SK-N-SH (cell line): ENCODE measurements at regions of chr1 and their contacts with region 1.

Region 1: GRCh38 chr1:179706339-179706941 is 36.7 kb upstream of the FAM163A start:
- DNase-seq: peak; percentile 56
- H3K4me3 ChIP-seq: no peak overlapping the region; a peak in 1 of 4 replicates
- H3K27ac ChIP-seq: peak overlapping the region in 1 of 2 experiments; percentile 39; a peak in 1 of 4 replicates
- H3K4me1 ChIP-seq: peaks cover 0 to 23% of the 10 kb centered on the region in 2 experiments; a peak in 2 of 4 replicates
- H3K27me3 ChIP-seq: no peaks in the 10 kb centered on the region
- CTCF ChIP-seq: peak; percentile 96
- EP300 ChIP-seq: no peak
- RAD21 ChIP-seq: peak; percentile 99

Region 2: GRCh38 chr1:179447489-179447888 is 259.0 kb before region 1 on chr1:
- CTCF ChIA-PET with region 1: no interaction called
- POLR2A ChIA-PET with region 1: no interaction called
- DNase-seq: no peak
- H3K4me3 ChIP-seq: no peak overlapping the region
- H3K27ac ChIP-seq: no peak overlapping the region
- H3K4me1 ChIP-seq: no peaks in the 10 kb centered on the region
- H3K27me3 ChIP-seq: no peaks in the 10 kb centered on the region
- CTCF ChIP-seq: peak; percentile 40
- EP300 ChIP-seq: no peak
- RAD21 ChIP-seq: no peak

Region 3: GRCh38 chr1:179719272-179719671 is 12.8 kb after region 1 on chr1:
- CTCF ChIA-PET with region 1: interaction called, 11 read pairs
- POLR2A ChIA-PET with region 1: no interaction called
- DNase-seq: no peak
- H3K4me3 ChIP-seq: no peak overlapping the region
- H3K27ac ChIP-seq: no peak overlapping the region
- H3K4me1 ChIP-seq: no peaks in the 10 kb centered on the region
- H3K27me3 ChIP-seq: no peaks in the 10 kb centered on the region
- CTCF ChIP-seq: no peak
- EP300 ChIP-seq: no peak
- RAD21 ChIP-seq: no peak

Region 4: DNA sequence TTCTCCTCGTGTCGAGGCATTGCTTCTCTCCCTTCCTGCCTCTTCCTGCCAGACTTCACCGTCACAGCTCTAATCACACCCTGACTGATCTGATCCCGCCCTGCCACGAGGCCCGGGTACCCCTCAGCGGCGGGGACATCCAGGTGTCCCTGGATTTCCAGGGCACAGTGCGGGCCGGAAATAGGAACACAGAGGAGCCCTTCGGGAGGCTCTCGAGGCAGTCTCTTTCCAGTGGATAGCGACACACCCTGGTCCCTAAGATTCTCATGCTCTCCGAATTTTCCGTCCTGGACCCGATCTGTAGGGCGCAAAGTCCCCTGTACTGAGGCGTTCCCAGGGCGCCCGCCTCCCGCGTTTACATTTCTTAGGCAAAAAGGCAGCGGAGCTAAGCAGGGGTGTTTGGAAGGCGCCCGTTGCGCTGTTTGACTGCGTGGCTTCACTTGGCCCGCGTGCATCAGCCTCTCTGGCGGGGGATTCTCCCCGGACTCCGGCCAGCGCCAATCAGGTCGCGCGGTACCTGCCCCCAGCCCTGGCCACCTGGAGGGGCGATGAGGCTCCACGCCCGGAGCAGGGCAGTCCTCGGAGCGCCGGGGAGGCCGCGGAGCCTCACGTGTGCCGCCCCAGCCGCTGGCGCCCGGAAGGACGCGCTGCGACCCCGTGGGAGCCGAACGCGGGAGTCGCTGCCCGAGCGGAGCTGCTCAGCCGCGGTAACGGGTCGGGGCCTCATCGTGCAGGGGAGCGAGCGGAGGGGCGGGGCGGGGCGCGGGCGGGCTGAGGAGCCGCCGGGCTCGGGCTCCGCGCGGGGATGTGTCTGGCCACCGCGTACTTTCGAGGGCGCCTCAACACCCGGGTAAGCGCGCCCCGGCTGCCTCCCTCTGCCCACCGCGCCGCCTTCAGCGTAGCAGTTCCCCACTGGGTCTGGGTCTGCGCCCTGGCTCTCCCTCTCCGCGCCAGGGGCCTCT is 36.6 kb after region 1 on chr1 and contains the start of gene FAM163A:
- CTCF ChIA-PET with region 1: interaction called, 14 read pairs
- POLR2A ChIA-PET with region 1: interaction called, 6 read pairs
- DNase-seq: peak; percentile 85
- H3K4me3 ChIP-seq: peak within 1 kb of the TSS in 1 of 2 experiments; percentile 54; a peak in 2 of 4 replicates
- H3K27ac ChIP-seq: peak within 1 kb of the TSS in 1 of 2 experiments; percentile 99; a peak in 2 of 4 replicates
- H3K4me1 ChIP-seq: peaks cover 0 to 38% of the 10 kb centered on the region in 2 experiments; a peak in 2 of 4 replicates
- H3K27me3 ChIP-seq: peaks cover 41% of the 10 kb centered on the region
- CTCF ChIP-seq: no peak
- EP300 ChIP-seq: no peak
- RAD21 ChIP-seq: peak; percentile 24; the same call in 1 of the 2 replicates
- polyA plus RNA-seq, gene FAM163A: 0.43 and 1.1 TPM in 2 replicates

Region 5: GRCh38 chr1:179770884-179771502 is 64.6 kb after region 1 on chr1:
- CTCF ChIA-PET with region 1: interaction called, 14 read pairs
- POLR2A ChIA-PET with region 1: no interaction called
- DNase-seq: no peak
- H3K4me3 ChIP-seq: no peak overlapping the region; a peak in 1 of 4 replicates
- H3K27ac ChIP-seq: peak overlapping the region in 1 of 2 experiments; percentile 56; a peak in 1 of 4 replicates
- H3K4me1 ChIP-seq: peaks cover 0 to 39% of the 10 kb centered on the region in 2 experiments; a peak in 2 of 4 replicates
- H3K27me3 ChIP-seq: no peaks in the 10 kb centered on the region
- CTCF ChIP-seq: no peak
- EP300 ChIP-seq: no peak
- RAD21 ChIP-seq: no peak

Region 6: GRCh38 chr1:179794669-179795068 is 88.2 kb after region 1 on chr1:
- CTCF ChIA-PET with region 1: interaction called, 37 read pairs
- POLR2A ChIA-PET with region 1: interaction called, 5 read pairs
- DNase-seq: peak; percentile 60
- H3K4me3 ChIP-seq: no peak overlapping the region
- H3K27ac ChIP-seq: peak overlapping the region in 1 of 2 experiments; percentile 94; a peak in 2 of 4 replicates
- H3K4me1 ChIP-seq: peaks cover 0 to 79% of the 10 kb centered on the region in 2 experiments; a peak in 2 of 4 replicates
- H3K27me3 ChIP-seq: no peaks in the 10 kb centered on the region
- CTCF ChIP-seq: no peak
- EP300 ChIP-seq: peak in 1 of 2 experiments; percentile 89; a peak in 2 of 4 replicates
- RAD21 ChIP-seq: no peak; the same call in 1 of the 2 replicates

Region 7: GRCh38 chr1:179860652-179861051 is 154.2 kb after region 1 on chr1:
- CTCF ChIA-PET with region 1: interaction called, 10 read pairs
- POLR2A ChIA-PET with region 1: no interaction called
- DNase-seq: no peak
- H3K4me3 ChIP-seq: no peak overlapping the region
- H3K27ac ChIP-seq: no peak overlapping the region
- H3K4me1 ChIP-seq: no peaks in the 10 kb centered on the region
- H3K27me3 ChIP-seq: no peaks in the 10 kb centered on the region
- CTCF ChIP-seq: no peak
- EP300 ChIP-seq: no peak
- RAD21 ChIP-seq: no peak

Region 8: GRCh38 chr1:180116964-180117763 is 410.7 kb after region 1 on chr1:
- CTCF ChIA-PET with region 1: no interaction called
- POLR2A ChIA-PET with region 1: no interaction called
- DNase-seq: no peak
- H3K4me3 ChIP-seq: no peak overlapping the region
- H3K27ac ChIP-seq: peak overlapping the region in 1 of 2 experiments; percentile 44; a peak in 1 of 4 replicates
- H3K4me1 ChIP-seq: no peaks in the 10 kb centered on the region; a peak in 1 of 4 replicates
- H3K27me3 ChIP-seq: no peaks in the 10 kb centered on the region
- CTCF ChIP-seq: no peak
- EP300 ChIP-seq: no peak
- RAD21 ChIP-seq: no peak

Region 9: GRCh38 chr1:180178511-180179161 is 472.2 kb after region 1 on chr1:
- CTCF ChIA-PET with region 1: interaction called, 28 read pairs
- POLR2A ChIA-PET with region 1: no interaction called
- DNase-seq: peak; percentile 85
- H3K4me3 ChIP-seq: peak overlapping the region in 1 of 2 experiments; percentile 27; a peak in 1 of 4 replicates
- H3K27ac ChIP-seq: no peak overlapping the region
- H3K4me1 ChIP-seq: peaks cover 0 to 12% of the 10 kb centered on the region in 2 experiments; a peak in 1 of 4 replicates
- H3K27me3 ChIP-seq: no peaks in the 10 kb centered on the region
- CTCF ChIP-seq: peak; percentile 97
- EP300 ChIP-seq: no peak
- RAD21 ChIP-seq: peak; percentile 96